ENCODE measurements at regions of chr1 and their contacts with region 1.

Region 1: GRCh38 chr1:156456622-156457465 is 43.7 kb downstream of the MEF2D start:
- DNase-seq: peak; percentile 98
- ATAC-seq: peak; percentile 95

Region 2: DNA sequence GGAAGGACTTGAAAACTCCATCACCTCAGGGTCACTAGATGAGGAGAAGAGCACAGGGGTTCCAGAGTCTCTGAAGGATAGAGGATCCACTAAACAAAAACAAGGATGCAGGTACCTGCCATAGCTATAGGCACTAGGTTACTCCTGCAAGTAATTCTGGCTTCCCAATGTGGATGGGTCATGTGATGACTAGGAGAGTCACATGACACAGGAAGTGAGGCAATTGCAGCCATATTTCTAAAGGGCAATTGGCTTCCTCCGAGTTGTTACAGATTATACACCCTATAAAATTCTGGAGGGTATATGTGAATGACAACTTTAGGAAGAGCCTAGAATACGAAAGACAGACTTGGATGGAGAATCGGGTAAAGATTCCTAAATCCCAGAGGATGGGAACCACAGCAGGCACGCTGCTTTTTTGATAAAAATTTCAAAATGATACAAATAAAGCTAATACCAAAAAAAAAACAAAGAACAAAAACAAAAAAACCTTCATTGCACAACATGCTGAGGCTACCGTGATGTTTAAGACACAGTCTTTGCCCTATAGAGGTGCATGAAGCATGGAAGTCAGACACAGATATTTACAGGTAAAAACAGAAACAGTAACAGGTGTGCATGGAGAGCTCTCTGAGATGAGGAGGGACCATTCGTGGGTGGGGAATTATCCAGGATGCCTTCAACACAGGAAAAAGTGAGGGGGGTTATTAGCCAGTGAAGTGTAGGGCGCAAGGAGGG is 1237.8 kb before region 1 on chr1:
- intact Hi-C with region 1: no loop called
- DNase-seq: no peak
- ATAC-seq: peak; percentile 49

Region 3: GRCh38 chr1:156489166-156489934 is 32.5 kb after region 1 on chr1:
- intact Hi-C with region 1: no loop called
- DNase-seq: peak; percentile 85
- ATAC-seq: peak; percentile 66

Region 4: DNA sequence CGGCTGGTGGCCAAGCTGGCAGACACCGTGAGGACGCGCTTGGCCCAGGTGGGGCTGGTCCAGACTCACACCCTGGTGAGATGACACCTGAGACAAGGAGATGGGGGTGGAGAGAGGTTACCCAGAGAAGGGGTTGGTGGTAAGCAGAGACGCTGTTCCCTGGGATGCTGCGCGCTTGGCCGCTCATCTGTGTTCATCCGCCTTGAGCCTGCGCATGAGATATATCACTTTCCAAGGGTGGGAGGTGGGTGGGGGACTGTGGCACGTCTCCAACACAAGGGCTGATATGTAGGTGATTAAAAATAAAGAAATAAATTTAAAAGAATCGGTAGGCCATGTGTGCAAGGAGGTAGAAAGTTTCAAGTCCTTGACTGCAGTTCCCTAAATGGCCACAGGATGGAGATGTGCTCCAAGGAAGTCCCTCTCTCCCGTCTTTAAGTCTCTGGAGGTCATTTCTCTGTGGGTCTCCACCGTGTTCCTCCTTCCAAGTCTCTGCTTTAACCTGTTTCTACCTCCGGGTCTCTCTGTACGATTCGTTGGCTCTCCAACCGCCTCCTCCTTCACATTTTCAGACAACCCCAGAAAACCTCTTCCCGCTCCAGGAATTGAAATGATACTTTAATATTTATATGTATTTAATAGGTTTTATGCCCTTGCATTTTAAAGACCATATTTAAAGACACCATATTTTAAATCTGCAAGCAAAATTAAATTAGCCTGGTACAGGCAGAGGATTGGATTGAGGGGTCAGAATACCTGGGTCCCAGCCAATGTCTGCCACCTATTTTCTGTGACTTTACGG is 127.2 kb after region 1 on chr1:
- intact Hi-C with region 1: loop called (anchors 5 kb)
- DNase-seq: no peak
- ATAC-seq: no peak

Measured in Right ventricle myocardium inferior (tissue), 1 donor.